Activated CD4-positive, alpha-beta T cell treated with anti-CD3 and anti-CD28 coated beads for 36 hours (primary cell): ENCODE measurements at regions of chr17 and their contacts with region 1.

Region 1: DNA sequence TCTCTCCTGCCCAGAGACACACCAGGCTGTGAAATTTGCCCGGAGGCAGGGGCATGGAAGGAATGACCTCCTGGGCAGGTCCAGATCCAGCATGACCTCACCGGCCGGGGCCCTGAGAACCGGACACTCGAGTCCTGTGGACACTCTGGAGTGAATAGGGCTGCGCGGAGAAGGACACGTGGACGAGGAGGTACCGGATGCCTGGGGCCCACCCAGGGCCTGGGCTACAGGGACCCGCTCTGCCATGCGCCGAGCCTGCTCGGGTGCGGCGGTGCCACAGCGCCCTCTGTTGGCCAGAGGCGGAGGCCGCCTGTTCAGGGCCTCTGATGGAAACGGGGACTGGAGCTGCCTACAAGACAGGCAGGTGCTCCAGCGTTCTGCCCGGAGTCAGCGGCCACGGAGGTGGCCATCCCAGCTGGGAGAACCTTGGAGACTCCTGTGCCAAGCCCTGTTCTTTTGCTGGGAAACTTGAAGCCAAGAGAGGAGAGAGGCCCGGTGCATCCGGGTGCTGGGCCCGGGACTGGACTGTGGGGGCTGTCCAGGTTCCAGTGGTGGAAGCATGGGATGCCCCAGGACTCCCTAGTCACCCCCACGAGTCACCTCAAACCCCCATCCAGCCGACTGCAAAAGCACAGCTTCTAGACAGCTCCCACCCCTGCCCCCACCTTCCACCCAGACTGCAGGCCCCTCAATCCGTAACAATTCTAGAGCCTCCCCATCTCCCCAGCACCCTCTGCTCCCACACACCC is 19.3 kb upstream of the NXPH3 start:
- DNase-seq: peak; percentile 92
- ATAC-seq: peak; percentile 96
- H3K4me3 Mint-ChIP-seq: no peak overlapping the region
- H3K27ac Mint-ChIP-seq: no peak overlapping the region
- H3K4me1 Mint-ChIP-seq: peaks cover 8% of the 10 kb centered on the region
- H3K27me3 Mint-ChIP-seq: peaks cover 3% of the 10 kb centered on the region

Region 2: GRCh38 chr17:49315551-49316257 is 240.7 kb before region 1 on chr17:
- CTCF ChIA-PET with region 1: interaction called, 9 read pairs
- POLR2A ChIA-PET with region 1: no interaction called
- intact Hi-C with region 1: loop called in 1 of 2 experiments (anchors 1 kb)
- DNase-seq: peak; percentile 89
- ATAC-seq: peak; percentile 100
- H3K4me3 Mint-ChIP-seq: no peak overlapping the region
- H3K27ac Mint-ChIP-seq: no peak overlapping the region
- H3K4me1 Mint-ChIP-seq: peaks cover 24% of the 10 kb centered on the region
- H3K27me3 Mint-ChIP-seq: no peaks in the 10 kb centered on the region

Region 3: GRCh38 chr17:49414622-49415350 is 141.6 kb before region 1 on chr17 and contains the start of gene PHB1:
- CTCF ChIA-PET with region 1: interaction called, 134 read pairs
- POLR2A ChIA-PET with region 1: interaction called, 5 read pairs
- intact Hi-C with region 1: no loop called
- DNase-seq: peak; percentile 98
- ATAC-seq: peak; percentile 100
- H3K4me3 Mint-ChIP-seq: peak within 1 kb of the TSS; percentile 100
- H3K27ac Mint-ChIP-seq: peak within 1 kb of the TSS; percentile 95
- H3K4me1 Mint-ChIP-seq: peaks cover 32% of the 10 kb centered on the region
- H3K27me3 Mint-ChIP-seq: no peaks in the 10 kb centered on the region
- total RNA-seq, gene PHB1: 346 to 350 TPM

Region 4: DNA sequence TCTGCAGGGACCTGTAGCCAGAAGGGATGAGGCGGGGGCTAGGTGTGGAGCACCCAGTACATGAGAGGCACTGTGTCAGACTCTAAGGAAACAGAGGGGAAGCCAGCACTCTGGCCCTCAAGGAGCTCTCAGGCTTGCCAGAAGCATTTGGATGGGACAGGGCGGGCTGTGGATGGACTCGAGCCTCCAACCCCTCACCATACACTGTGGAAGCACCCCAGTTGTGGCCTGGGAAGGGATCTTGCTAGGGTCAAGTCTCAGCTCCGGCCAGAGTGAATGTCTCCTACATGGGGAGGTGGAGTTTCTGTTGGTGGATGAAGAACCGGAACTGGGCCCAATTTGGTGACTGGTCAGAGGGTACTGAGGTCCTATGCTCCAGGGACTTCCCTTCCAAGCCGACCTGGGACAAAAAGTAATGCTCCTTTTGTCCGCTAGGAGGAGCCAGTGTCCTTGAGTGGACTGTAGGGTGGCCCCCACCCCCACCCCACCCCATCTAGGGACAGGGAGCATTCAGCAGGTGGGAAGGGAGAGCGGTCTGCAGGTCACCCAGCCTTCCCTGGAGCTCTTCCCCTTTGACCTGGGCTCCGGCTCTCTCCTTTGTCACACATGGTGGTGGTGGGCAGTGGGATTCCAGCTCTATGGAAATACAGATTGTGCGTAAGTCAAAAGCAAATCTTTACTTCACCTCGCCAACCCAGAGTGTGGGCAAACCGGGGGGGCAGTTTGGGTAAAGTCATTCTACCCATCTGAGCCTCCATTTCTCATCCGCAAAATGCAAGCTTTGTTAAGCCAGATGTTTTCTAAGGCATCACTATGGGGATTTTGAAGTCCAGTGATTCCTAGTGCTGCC is 121.4 kb before region 1 on chr17:
- CTCF ChIA-PET with region 1: interaction called, 64 read pairs
- POLR2A ChIA-PET with region 1: no interaction called
- intact Hi-C with region 1: loop called (anchors 1 kb)
- DNase-seq: peak; percentile 66
- ATAC-seq: peak; percentile 60
- H3K4me3 Mint-ChIP-seq: no peak overlapping the region
- H3K27ac Mint-ChIP-seq: no peak overlapping the region
- H3K4me1 Mint-ChIP-seq: no peaks in the 10 kb centered on the region
- H3K27me3 Mint-ChIP-seq: peaks cover 20% of the 10 kb centered on the region

Region 5: DNA sequence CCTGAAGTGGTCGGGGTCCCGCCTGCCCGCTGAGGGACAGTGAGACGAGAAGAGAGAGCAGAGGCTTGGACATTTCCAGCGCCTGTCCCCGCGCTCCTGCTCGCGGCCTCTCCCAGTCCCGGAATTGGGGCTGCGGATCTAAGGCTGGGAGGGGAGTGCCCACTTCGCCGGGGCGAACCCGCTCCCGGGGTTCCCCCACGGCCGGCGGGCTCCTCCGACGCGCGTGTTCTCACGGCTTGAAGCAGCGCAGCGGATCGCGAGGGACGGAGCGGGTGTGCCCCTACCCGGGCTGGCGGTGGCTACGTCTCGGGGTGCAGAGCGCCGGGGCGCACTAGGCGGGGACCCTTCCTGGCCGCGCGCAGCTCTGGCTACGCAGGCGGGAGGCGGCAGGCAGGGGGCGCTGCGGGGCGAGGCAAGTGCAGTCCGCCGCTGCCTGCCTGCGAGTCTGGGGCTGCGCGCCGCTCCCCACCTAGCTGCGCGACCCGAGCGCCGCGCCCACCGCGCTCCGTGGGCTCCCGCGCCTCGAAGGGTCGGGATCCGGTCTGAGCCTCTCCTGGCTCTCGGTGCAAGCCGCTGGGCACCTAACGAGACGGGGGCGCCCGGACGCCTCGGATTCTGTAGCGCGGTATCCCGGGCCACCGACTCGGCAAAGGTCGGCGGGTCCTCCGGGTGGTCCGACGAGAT is 60.1 kb before region 1 on chr17:
- CTCF ChIA-PET with region 1: interaction called, 46 read pairs
- POLR2A ChIA-PET with region 1: no interaction called
- intact Hi-C with region 1: loop called (anchors 1 kb)
- DNase-seq: peak; percentile 92
- ATAC-seq: peak; percentile 85
- H3K4me3 Mint-ChIP-seq: peak overlapping the region; percentile 63
- H3K27ac Mint-ChIP-seq: no peak overlapping the region
- H3K4me1 Mint-ChIP-seq: peaks cover 16% of the 10 kb centered on the region
- H3K27me3 Mint-ChIP-seq: peaks cover 51% of the 10 kb centered on the region

Region 6: GRCh38 chr17:49545806-49546545 is 10.4 kb before region 1 on chr17:
- CTCF ChIA-PET with region 1: interaction called, 17 read pairs
- POLR2A ChIA-PET with region 1: no interaction called
- intact Hi-C with region 1: no loop called
- DNase-seq: no peak
- ATAC-seq: no peak
- H3K4me3 Mint-ChIP-seq: no peak overlapping the region
- H3K27ac Mint-ChIP-seq: no peak overlapping the region
- H3K4me1 Mint-ChIP-seq: no peaks in the 10 kb centered on the region
- H3K27me3 Mint-ChIP-seq: peaks cover 7% of the 10 kb centered on the region

Region 7: GRCh38 chr17:49694847-49695683 is 138.7 kb after region 1 on chr17:
- CTCF ChIA-PET with region 1: interaction called, 52 read pairs
- POLR2A ChIA-PET with region 1: no interaction called
- intact Hi-C with region 1: no loop called
- DNase-seq: peak; percentile 85
- ATAC-seq: no peak
- H3K4me3 Mint-ChIP-seq: no peak overlapping the region
- H3K27ac Mint-ChIP-seq: peak overlapping the region; percentile 90
- H3K4me1 Mint-ChIP-seq: peaks cover 36% of the 10 kb centered on the region
- H3K27me3 Mint-ChIP-seq: no peaks in the 10 kb centered on the region

Region 8: DNA sequence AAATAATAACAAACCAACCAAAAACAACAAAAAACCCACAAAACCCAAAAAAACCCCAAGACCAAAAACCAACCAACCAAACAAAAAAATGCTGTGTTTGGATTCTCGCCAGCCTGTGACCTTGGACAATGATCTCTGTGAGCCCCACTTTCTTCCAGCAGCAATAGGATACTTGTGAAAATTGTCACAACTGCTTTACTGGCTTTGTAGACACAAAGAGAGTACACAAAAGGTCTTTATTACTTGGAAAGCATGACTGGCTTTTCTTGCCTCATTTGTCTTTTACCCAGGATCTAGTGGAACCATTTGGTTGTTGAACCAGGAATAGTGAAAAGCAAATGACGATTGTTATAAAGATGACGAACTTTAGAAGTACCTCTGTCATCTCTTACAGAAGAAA is 1960.5 kb after region 1 on chr17:
- CTCF ChIA-PET with region 1: no interaction called
- POLR2A ChIA-PET with region 1: no interaction called
- intact Hi-C with region 1: no loop called
- DNase-seq: no peak
- ATAC-seq: no peak
- H3K4me3 Mint-ChIP-seq: no peak overlapping the region
- H3K27ac Mint-ChIP-seq: no peak overlapping the region
- H3K4me1 Mint-ChIP-seq: peaks cover 2% of the 10 kb centered on the region
- H3K27me3 Mint-ChIP-seq: peaks cover 2% of the 10 kb centered on the region